ENCODE measurements at regions of chr15 and their contacts with region 1.

Region 1: DNA sequence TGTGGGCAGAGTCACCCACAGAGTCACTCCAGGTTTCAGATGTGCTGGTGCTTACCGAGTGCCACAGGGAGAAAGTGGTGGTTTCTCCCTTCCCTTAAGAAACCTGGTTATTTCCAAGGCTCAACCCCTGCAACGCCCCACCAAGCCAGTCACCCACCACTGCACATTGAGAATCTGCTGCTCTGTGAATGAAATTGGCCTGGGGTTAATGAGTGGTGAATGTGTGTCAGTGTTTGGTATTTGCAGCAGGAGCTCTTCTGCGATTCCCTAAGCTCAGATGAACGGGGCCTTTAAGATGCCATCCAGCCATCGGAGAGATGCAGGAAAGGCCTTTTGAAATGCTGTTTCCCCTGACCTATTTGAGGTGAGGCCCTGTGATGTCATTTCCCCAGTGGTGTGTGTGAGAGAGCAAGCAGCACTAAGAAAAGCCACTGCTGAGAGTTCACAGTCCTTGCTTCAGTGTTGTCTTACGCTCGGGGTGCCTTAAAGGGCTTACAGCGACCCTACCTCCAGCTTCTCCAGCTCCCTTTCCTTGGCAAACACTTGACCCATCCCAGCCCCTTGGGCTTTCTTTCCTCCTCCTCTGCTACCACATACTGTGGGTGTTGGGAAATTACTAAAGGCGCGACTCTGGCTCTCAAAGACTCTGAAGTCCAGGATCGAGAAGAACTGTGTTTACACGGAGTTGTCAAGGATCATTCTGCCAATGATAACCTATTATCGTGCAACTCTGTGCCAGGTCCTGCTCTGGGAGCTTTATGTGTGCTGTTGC is 68.9 kb downstream of the SMAD3 start:
- DNase-seq: peak; percentile 84
- H3K4me3 Mint-ChIP-seq: peak overlapping the region; percentile 79
- H3K27ac Mint-ChIP-seq: peak overlapping the region; percentile 93
- H3K4me1 Mint-ChIP-seq: peaks cover 85% of the 10 kb centered on the region
- H3K27me3 Mint-ChIP-seq: no peaks in the 10 kb centered on the region

Region 2: GRCh38 chr15:67120839-67121643 is 13.2 kb before region 1 on chr15:
- CTCF ChIA-PET with region 1: interaction called, 4 read pairs
- intact Hi-C with region 1: loop called (anchors 1 kb)
- DNase-seq: peak; percentile 94
- H3K4me3 Mint-ChIP-seq: peak overlapping the region; percentile 70
- H3K27ac Mint-ChIP-seq: peak overlapping the region; percentile 95
- H3K4me1 Mint-ChIP-seq: peaks cover 80% of the 10 kb centered on the region
- H3K27me3 Mint-ChIP-seq: no peaks in the 10 kb centered on the region